ENCODE measurements at regions of chr1 and their contacts with region 1.

Region 1: DNA sequence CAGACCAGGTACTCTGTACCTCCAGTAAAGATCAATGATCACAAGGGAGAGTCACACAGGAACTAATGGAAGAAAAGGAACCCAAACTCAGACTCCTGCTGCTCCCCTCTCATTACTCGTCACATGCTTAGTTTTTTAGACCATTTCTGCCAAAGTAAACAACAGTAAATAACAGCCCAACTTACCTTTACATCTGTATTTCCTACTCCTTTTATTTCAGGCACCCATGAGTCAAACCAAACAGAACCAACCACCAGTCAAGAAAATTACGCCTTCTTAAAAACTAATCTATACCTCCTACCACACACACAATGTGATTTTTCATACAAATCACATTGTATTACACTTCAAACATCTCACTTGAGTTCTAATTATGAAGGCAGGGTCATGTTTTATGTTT is 61.4 kb upstream of the HTR1D start:
- DNase-seq: no peak
- ATAC-seq: no peak
- H3K4me3 Mint-ChIP-seq: no peak overlapping the region
- H3K27ac Mint-ChIP-seq: no peak overlapping the region
- H3K4me1 Mint-ChIP-seq: no peaks in the 10 kb centered on the region
- H3K27me3 Mint-ChIP-seq: peaks cover 16% of the 10 kb centered on the region

Region 2: GRCh38 chr1:23196639-23197328 is 81.9 kb before region 1 on chr1:
- CTCF ChIA-PET with region 1: no interaction called
- POLR2A ChIA-PET with region 1: no interaction called
- intact Hi-C with region 1: loop called in 1 of 2 experiments (anchors 5 kb)
- DNase-seq: no peak
- ATAC-seq: no peak
- H3K4me3 Mint-ChIP-seq: no peak overlapping the region
- H3K27ac Mint-ChIP-seq: no peak overlapping the region
- H3K4me1 Mint-ChIP-seq: no peaks in the 10 kb centered on the region
- H3K27me3 Mint-ChIP-seq: peaks cover 3% of the 10 kb centered on the region

Region 3: GRCh38 chr1:23216771-23217420 is 61.8 kb before region 1 on chr1:
- CTCF ChIA-PET with region 1: interaction called, 4 read pairs
- POLR2A ChIA-PET with region 1: no interaction called
- intact Hi-C with region 1: loop called in 1 of 2 experiments (anchors 5 kb)
- DNase-seq: peak; percentile 58
- ATAC-seq: peak; percentile 68
- H3K4me3 Mint-ChIP-seq: peak overlapping the region; percentile 1
- H3K27ac Mint-ChIP-seq: no peak overlapping the region
- H3K4me1 Mint-ChIP-seq: peaks cover 2% of the 10 kb centered on the region
- H3K27me3 Mint-ChIP-seq: peaks cover 50% of the 10 kb centered on the region

Measured in activated CD4-positive, alpha-beta T cell treated with anti-CD3 and anti-CD28 coated beads for 36 hours (primary cell).